Activated CD4-positive, alpha-beta T cell treated with anti-CD3 and anti-CD28 coated beads for 36 hours (primary cell): ENCODE measurements at regions of chrX and their contacts with region 1.

Region 1: DNA sequence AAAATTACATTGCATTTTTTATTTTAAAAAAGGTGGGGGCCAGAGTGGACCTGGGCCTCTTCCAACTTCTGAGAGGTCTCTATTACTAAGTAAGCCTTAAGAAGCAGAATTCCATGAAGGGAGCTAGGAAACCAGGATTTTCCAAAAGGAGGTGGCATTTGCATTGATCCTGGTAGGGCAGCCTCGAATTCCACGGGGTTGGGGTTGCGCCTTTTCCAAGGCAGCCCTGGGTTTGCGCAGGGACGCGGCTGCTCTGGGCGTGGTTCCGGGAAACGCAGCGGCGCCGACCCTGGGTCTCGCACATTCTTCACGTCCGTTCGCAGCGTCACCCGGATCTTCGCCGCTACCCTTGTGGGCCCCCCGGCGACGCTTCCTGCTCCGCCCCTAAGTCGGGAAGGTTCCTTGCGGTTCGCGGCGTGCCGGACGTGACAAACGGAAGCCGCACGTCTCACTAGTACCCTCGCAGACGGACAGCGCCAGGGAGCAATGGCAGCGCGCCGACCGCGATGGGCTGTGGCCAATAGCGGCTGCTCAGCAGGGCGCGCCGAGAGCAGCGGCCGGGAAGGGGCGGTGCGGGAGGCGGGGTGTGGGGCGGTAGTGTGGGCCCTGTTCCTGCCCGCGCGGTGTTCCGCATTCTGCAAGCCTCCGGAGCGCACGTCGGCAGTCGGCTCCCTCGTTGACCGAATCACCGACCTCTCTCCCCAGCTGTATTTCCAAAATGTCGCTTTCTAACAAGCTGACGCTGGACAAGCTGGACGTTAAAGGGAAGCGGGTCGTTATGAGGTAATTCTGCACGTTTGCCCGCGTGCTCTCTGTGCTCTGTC is at the start of gene PGK1:
- DNase-seq: peak; percentile 96
- ATAC-seq: peak; percentile 97
- H3K4me3 Mint-ChIP-seq: peak within 1 kb of the TSS; percentile 98
- H3K27ac Mint-ChIP-seq: peak within 1 kb of the TSS; percentile 95
- H3K4me1 Mint-ChIP-seq: peaks cover 31% of the 10 kb centered on the region
- H3K27me3 Mint-ChIP-seq: no peaks in the 10 kb centered on the region
- total RNA-seq, gene PGK1: 1,263 to 1,446 TPM

Region 2: GRCh38 chrX:77675986-77676385 is 427.8 kb before region 1 on chrX:
- CTCF ChIA-PET with region 1: no interaction called
- POLR2A ChIA-PET with region 1: no interaction called
- intact Hi-C with region 1: no loop called
- DNase-seq: no peak
- ATAC-seq: no peak
- H3K4me3 Mint-ChIP-seq: no peak overlapping the region
- H3K27ac Mint-ChIP-seq: no peak overlapping the region
- H3K4me1 Mint-ChIP-seq: peaks cover 3% of the 10 kb centered on the region
- H3K27me3 Mint-ChIP-seq: no peaks in the 10 kb centered on the region

Region 3: DNA sequence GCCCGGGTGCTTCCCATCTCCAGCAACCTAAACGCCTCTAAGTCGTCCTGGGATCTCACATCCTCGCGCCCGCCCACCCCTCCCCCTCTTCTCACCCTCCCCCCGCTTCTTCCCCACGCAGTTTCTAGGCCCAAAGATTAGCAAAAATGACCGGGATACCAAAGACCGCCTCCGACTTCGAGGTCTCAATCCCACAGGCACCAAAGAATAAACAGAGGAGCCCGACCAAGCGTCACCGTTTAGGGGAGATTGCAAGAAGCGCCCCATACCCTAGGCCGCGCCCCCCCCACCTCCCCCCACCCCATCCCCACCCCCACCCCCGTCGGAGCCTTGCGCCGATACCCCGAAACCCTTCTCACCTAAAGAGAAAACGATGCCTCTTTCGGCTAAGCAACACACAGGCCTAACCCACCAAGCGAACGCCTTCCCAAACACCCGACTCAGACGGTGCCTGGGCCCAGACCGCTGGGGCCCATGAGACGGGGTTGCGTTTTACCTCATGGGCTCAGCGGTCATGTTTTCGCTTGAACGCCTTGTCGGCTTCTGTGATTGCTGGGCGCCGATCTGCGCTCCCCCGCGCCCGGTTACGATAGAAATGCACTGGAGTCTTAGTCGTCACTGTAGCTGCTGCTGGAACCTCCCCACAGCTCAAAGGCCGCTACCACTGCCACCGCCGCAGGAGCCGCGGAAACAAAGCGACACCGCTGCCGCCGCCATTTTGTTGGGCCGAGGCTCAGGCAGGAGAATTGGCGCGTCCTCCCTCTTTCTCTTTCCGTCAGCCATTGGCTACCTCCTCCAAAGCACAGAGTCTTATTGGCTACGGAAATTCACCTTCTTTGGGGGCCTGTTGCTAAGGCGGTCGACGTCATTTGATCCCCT is 318.1 kb before region 1 on chrX and contains the start of gene ATRX:
- CTCF ChIA-PET with region 1: no interaction called
- POLR2A ChIA-PET with region 1: no interaction called
- intact Hi-C with region 1: loop called in 1 of 2 experiments (anchors 5 kb)
- DNase-seq: peak; percentile 84
- ATAC-seq: peak; percentile 91
- H3K4me3 Mint-ChIP-seq: peak within 1 kb of the TSS; percentile 91
- H3K27ac Mint-ChIP-seq: peak within 1 kb of the TSS; percentile 100
- H3K4me1 Mint-ChIP-seq: peaks cover 26% of the 10 kb centered on the region
- H3K27me3 Mint-ChIP-seq: no peaks in the 10 kb centered on the region
- total RNA-seq, gene ATRX: 52.1 to 70.6 TPM

Region 4: GRCh38 chrX:77910108-77910840 is 193.6 kb before region 1 on chrX and contains the start of gene ATP7A:
- CTCF ChIA-PET with region 1: interaction called, 3 read pairs
- POLR2A ChIA-PET with region 1: no interaction called
- intact Hi-C with region 1: loop called (anchors 1 kb)
- DNase-seq: peak; percentile 94
- ATAC-seq: peak; percentile 94
- H3K4me3 Mint-ChIP-seq: peak within 1 kb of the TSS; percentile 85
- H3K27ac Mint-ChIP-seq: peak within 1 kb of the TSS; percentile 99
- H3K4me1 Mint-ChIP-seq: peaks cover 13% of the 10 kb centered on the region
- H3K27me3 Mint-ChIP-seq: no peaks in the 10 kb centered on the region
- total RNA-seq, gene ATP7A: 9.5 to 9.7 TPM

Region 5: DNA sequence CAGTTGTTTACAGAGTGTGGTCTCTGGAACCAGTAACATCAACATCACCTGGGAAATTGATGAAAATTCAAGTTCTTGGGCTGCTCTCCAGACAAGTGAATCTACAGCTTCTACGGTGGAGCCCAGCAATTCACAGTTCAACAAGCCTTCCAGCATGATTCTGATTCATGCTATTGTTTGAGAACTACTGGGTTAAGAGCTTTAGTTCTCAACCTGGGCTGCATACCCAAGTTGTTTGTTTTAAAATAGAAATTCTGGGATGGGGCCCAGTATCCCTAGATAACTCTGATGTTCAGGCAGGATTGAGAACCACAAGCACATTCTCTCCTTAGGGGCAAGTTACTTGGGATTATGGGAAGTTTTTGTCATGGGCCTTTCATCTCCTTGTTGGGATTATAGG is 37.7 kb before region 1 on chrX:
- CTCF ChIA-PET with region 1: no interaction called
- POLR2A ChIA-PET with region 1: no interaction called
- intact Hi-C with region 1: loop called in 1 of 2 experiments (anchors 5 kb)
- DNase-seq: no peak
- ATAC-seq: no peak
- H3K4me3 Mint-ChIP-seq: no peak overlapping the region
- H3K27ac Mint-ChIP-seq: no peak overlapping the region
- H3K4me1 Mint-ChIP-seq: peaks cover 18% of the 10 kb centered on the region
- H3K27me3 Mint-ChIP-seq: no peaks in the 10 kb centered on the region

Region 6: GRCh38 chrX:78945186-78945912 is 841.5 kb after region 1 on chrX and contains the start of gene P2RY10:
- CTCF ChIA-PET with region 1: no interaction called
- POLR2A ChIA-PET with region 1: no interaction called
- intact Hi-C with region 1: loop called in 1 of 2 experiments (anchors 10 kb)
- DNase-seq: peak; percentile 35
- ATAC-seq: peak; percentile 79
- H3K4me3 Mint-ChIP-seq: peak within 1 kb of the TSS; percentile 90
- H3K27ac Mint-ChIP-seq: peak within 1 kb of the TSS; percentile 96
- H3K4me1 Mint-ChIP-seq: peaks cover 57% of the 10 kb centered on the region
- H3K27me3 Mint-ChIP-seq: no peaks in the 10 kb centered on the region
- total RNA-seq, gene P2RY10: 30.4 to 65.7 TPM

Region 7: GRCh38 chrX:79161655-79162054 is 1057.8 kb after region 1 on chrX:
- CTCF ChIA-PET with region 1: no interaction called
- POLR2A ChIA-PET with region 1: no interaction called
- intact Hi-C with region 1: loop called in 1 of 2 experiments (anchors 10 kb)
- DNase-seq: peak; percentile 50
- ATAC-seq: peak; percentile 77
- H3K4me3 Mint-ChIP-seq: peak overlapping the region; percentile 75
- H3K27ac Mint-ChIP-seq: peak overlapping the region; percentile 93
- H3K4me1 Mint-ChIP-seq: peaks cover 62% of the 10 kb centered on the region
- H3K27me3 Mint-ChIP-seq: no peaks in the 10 kb centered on the region